Gastrocnemius medialis (tissue), 4 donors: ENCODE measurements at regions of chr3 and their contacts with region 1.

Region 1: DNA sequence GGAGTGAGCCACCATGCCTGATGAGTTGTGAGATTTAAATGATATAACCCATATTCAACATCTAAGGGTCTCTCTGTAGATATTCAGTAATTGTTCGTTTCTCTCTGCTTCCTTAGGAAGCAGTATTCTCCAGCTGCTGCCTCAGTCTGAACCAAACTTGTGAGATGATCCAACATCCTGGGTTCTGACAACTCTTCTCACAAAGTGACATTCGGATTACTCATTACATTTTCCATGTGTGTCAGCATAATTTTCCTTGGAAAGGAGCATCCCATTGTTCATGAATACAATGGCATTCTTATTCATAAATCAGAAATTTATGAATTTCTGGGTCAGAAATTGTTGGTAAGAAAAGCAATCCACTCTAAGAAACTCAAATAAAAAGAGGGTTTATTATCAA is 15.0 kb upstream of the SEC22A start:
- DNase-seq: no peak
- ATAC-seq: no peak
- H3K4me3 ChIP-seq: no peak overlapping the region
- H3K27ac ChIP-seq: no peak overlapping the region
- H3K4me1 ChIP-seq: no peaks in the 10 kb centered on the region
- H3K27me3 ChIP-seq: no peaks in the 10 kb centered on the region
- CTCF ChIP-seq: no peak
- POLR2A ChIP-seq: no peak

Region 2: DNA sequence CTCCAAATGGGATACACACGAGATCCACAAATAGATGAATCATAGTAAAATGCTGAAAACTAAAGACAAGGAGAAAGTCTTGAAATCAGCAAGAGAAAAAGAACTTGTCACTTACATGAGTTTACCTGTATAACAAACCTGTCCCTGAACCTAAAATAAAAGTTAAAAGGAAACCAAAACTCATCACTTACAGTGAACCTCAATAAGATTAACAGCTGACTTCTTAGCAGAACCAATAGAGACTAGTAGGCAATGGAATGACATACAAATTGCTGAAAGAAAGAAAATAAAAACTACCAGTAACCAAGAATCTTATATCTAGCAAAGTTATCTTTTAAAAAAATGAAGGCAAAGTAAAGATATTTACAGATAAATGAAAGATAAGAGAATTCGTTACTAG is 42.5 kb after region 1 on chr3:
- in situ Hi-C with region 1: no loop called
- intact Hi-C with region 1: no loop called
- DNase-seq: no peak
- ATAC-seq: no peak
- H3K4me3 ChIP-seq: no peak overlapping the region
- H3K27ac ChIP-seq: no peak overlapping the region
- H3K4me1 ChIP-seq: peaks cover 0 to 6% of the 10 kb centered on the region in 2 donors
- H3K27me3 ChIP-seq: no peaks in the 10 kb centered on the region
- CTCF ChIP-seq: no peak
- POLR2A ChIP-seq: no peak

Region 3: DNA sequence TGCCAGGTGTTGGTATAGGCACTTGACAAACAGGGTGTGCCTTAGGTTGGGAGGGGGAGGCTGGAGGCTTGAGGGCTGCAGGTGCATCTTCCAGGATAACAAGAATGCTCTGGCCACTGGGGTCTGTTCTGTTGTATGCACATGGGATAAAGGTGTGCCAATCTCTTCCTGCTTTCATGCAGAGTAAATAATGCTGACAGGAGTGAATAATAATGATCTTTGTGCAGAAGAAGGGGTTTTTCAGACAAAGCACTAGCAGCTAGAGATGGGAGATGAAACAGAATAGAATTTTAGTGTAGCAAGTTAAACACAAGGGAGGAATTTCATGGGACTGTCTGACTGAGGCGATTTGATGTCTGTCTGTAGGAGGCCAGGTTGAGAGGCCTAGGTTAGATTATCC is 807.1 kb after region 1 on chr3:
- in situ Hi-C with region 1: no loop called
- intact Hi-C with region 1: loop called (anchors 10 kb)
- DNase-seq: no peak
- ATAC-seq: no peak
- H3K4me3 ChIP-seq: no peak overlapping the region
- H3K27ac ChIP-seq: no peak overlapping the region
- H3K4me1 ChIP-seq: no peaks in the 10 kb centered on the region
- H3K27me3 ChIP-seq: no peaks in the 10 kb centered on the region
- CTCF ChIP-seq: no peak
- POLR2A ChIP-seq: no peak